Gastrocnemius medialis (tissue), 4 donors: ENCODE measurements at regions of chr7 and their contacts with region 1.

Region 1: DNA sequence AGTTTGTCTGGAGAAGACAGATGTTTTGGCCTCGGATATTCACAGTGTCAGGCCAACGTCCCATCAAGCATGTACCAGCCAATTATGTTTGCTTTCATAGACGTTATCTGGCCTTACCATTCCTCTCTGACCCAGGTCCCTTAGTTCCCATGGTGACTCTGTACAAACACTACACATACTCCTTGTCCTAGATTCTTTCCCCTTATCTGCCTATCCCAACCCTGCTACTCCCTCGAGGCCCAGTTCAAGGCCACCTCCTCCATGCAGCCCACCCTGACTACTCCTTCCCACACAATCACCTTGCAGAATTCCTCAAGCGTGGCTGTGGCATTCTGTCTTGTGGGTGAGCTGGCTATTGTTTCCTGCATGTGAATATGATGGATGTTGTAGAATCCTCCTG is 155.2 kb downstream of the PRKAG2 start:
- DNase-seq: no peak
- ATAC-seq: no peak
- H3K4me3 ChIP-seq: no peak overlapping the region
- H3K27ac ChIP-seq: peak overlapping the region in 1 of 4 donors; percentile 79
- H3K4me1 ChIP-seq: peaks cover 25 to 30% of the 10 kb centered on the region in 2 donors
- H3K27me3 ChIP-seq: no peaks in the 10 kb centered on the region
- CTCF ChIP-seq: no peak
- POLR2A ChIP-seq: no peak

Region 2: DNA sequence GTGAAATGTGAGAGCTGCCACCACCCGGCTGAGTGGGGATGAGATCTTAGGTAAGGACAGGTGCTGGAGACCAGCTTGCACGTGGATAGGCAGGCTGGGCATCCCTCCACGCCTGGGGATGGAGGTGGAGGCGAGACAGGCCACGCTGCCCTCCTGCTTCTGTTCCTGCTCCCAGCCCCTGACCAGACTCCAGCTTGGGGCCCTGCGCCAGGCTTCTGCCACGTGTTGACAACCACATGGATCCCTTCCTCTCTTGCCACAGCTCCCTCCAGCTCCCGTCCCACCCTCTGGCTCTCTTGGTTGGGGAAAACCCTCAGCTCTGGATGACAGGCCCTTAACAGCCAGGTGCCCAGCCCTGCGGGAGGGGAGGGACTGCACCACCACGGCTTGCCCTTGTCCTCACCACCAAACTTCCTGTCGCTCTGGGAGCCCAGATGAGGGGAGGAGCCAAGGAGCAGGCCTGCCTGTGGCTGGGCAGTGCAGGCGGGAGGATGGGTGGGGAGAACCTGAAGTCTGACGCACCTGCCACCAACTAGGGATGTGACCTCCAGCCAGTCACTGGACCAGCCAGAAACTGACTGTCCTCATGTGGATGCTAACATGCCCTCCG is 779.6 kb before region 1 on chr7:
- in situ Hi-C with region 1: no loop called
- intact Hi-C with region 1: no loop called
- DNase-seq: no peak
- ATAC-seq: no peak
- H3K4me3 ChIP-seq: no peak overlapping the region
- H3K27ac ChIP-seq: no peak overlapping the region
- H3K4me1 ChIP-seq: no peaks in the 10 kb centered on the region
- H3K27me3 ChIP-seq: peaks cover 0 to 6% (median 0%) of the 10 kb centered on the region in 3 donors
- CTCF ChIP-seq: no peak
- POLR2A ChIP-seq: no peak

Region 3: DNA sequence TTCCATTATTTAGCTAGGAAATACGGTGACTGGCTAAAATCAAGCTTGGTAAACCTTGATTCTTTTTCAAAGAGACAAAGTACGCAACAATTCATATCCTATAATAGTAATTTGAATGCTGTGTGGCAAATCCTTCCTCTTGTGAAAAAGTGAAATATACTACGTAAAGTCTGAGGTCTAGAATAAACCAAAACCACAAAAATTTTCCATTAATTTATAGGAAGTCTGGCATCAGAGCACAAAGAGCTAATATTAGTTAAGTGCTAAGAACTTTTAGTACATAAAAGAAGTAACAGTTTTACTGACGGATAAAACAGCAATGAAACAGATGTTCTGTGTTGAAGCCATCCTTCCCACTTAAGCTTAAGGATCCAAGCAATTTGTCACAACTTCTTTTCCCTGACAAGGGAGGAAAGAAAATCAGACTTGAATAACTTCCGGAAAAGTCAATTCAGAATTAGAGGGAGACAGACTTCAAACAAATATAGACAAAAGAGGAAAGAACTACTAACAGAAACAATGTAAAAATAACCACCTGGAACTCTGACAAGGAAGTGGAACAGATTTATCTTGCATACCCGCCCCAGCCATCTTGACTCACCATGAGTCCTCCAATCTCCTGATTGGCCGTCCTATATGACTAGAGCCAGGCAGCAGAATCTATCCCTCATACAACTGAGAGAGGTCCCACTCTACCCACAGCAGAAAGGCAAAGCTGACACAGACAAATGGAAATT is 236.6 kb before region 1 on chr7:
- in situ Hi-C with region 1: no loop called
- intact Hi-C with region 1: no loop called
- DNase-seq: no peak
- ATAC-seq: peak; percentile 32 to 51
- H3K4me3 ChIP-seq: no peak overlapping the region
- H3K27ac ChIP-seq: peak overlapping the region; percentile 47 to 72 (median 66)
- H3K4me1 ChIP-seq: peaks cover 32 to 38% of the 10 kb centered on the region in 2 donors
- H3K27me3 ChIP-seq: no peaks in the 10 kb centered on the region
- CTCF ChIP-seq: no peak
- POLR2A ChIP-seq: no peak

Region 4: GRCh38 chr7:151736403-151736909 is 14.8 kb after region 1 on chr7:
- in situ Hi-C with region 1: no loop called
- intact Hi-C with region 1: loop called (anchors 2 kb)
- DNase-seq: peak; percentile 88 to 95
- ATAC-seq: peak; percentile 94
- H3K4me3 ChIP-seq: peak overlapping the region; percentile 43 to 48 (median 48)
- H3K27ac ChIP-seq: peak overlapping the region; percentile 74 to 91 (median 88)
- H3K4me1 ChIP-seq: peaks cover 16 to 18% of the 10 kb centered on the region in 2 donors
- H3K27me3 ChIP-seq: no peaks in the 10 kb centered on the region
- CTCF ChIP-seq: peak in 3 of 5 experiments; percentile 25 to 51 (median 41)
- POLR2A ChIP-seq: peak; percentile 74 to 85